Sigmoid colon (tissue), 7 donors: ENCODE measurements at regions of chr6 and their contacts with region 1.

Region 1: GRCh38 chr6:154156135-154156896 is 117.3 kb downstream of the OPRM1 start:
- DNase-seq: no peak
- H3K4me3 ChIP-seq: no peak overlapping the region
- H3K27ac ChIP-seq: no peak overlapping the region
- H3K4me1 ChIP-seq: peaks cover 0 to 14% (median 9%) of the 10 kb centered on the region in 4 donors
- H3K27me3 ChIP-seq: no peaks in the 10 kb centered on the region
- CTCF ChIP-seq: peak in 2 of 4 experiments; percentile 6 to 14
- EP300 ChIP-seq: no peak
- POLR2A ChIP-seq: no peak

Region 2: GRCh38 chr6:154276810-154277628 is 120.7 kb after region 1 on chr6:
- intact Hi-C with region 1: loop called (anchors 2 kb)
- DNase-seq: no peak
- H3K4me3 ChIP-seq: no peak overlapping the region
- H3K27ac ChIP-seq: no peak overlapping the region
- H3K4me1 ChIP-seq: no peaks in the 10 kb centered on the region
- H3K27me3 ChIP-seq: no peaks in the 10 kb centered on the region
- CTCF ChIP-seq: peak; percentile 22 to 56 (median 46)
- EP300 ChIP-seq: no peak
- POLR2A ChIP-seq: no peak

Region 3: GRCh38 chr6:154370545-154370944 is 214.2 kb after region 1 on chr6:
- intact Hi-C with region 1: loop called (anchors 10 kb)
- DNase-seq: no peak
- H3K4me3 ChIP-seq: no peak overlapping the region
- H3K27ac ChIP-seq: no peak overlapping the region
- H3K4me1 ChIP-seq: no peaks in the 10 kb centered on the region
- H3K27me3 ChIP-seq: no peaks in the 10 kb centered on the region
- CTCF ChIP-seq: peak in 1 of 4 experiments; percentile 9
- EP300 ChIP-seq: no peak
- POLR2A ChIP-seq: no peak

Region 4: GRCh38 chr6:154410619-154411072 is 254.3 kb after region 1 on chr6:
- intact Hi-C with region 1: loop called (anchors 10 kb)
- DNase-seq: peak; percentile 75
- H3K4me3 ChIP-seq: no peak overlapping the region
- H3K27ac ChIP-seq: peak overlapping the region; percentile 79 to 90 (median 88)
- H3K4me1 ChIP-seq: peaks cover 0 to 44% (median 41%) of the 10 kb centered on the region in 4 donors
- H3K27me3 ChIP-seq: no peaks in the 10 kb centered on the region
- CTCF ChIP-seq: no peak
- EP300 ChIP-seq: peak in 3 of 4 donors; percentile 14 to 32 (median 25)
- POLR2A ChIP-seq: no peak

Region 5: GRCh38 chr6:154510143-154510905 is 354.0 kb after region 1 on chr6 and contains the start of gene CNKSR3:
- intact Hi-C with region 1: loop called (anchors 5 kb)
- DNase-seq: peak; percentile 96
- H3K4me3 ChIP-seq: peak within 1 kb of the TSS; percentile 62 to 81 (median 76)
- H3K27ac ChIP-seq: peak within 1 kb of the TSS; percentile 93 to 98 (median 95)
- H3K4me1 ChIP-seq: peaks cover 0 to 44% (median 37%) of the 10 kb centered on the region in 4 donors
- H3K27me3 ChIP-seq: no peaks in the 10 kb centered on the region
- CTCF ChIP-seq: no peak
- EP300 ChIP-seq: no peak
- POLR2A ChIP-seq: peak; percentile 46 to 77
- total RNA-seq, gene CNKSR3: 12.8 to 16.8 (median 14.4) TPM

Region 6: GRCh38 chr6:154515826-154516225 is 359.5 kb after region 1 on chr6:
- intact Hi-C with region 1: loop called (anchors 5 kb)
- DNase-seq: no peak
- H3K4me3 ChIP-seq: peak overlapping the region in 2 of 4 donors; percentile 13 to 25
- H3K27ac ChIP-seq: peak overlapping the region in 2 of 4 donors; percentile 39
- H3K4me1 ChIP-seq: peaks cover 0 to 13% (median 10%) of the 10 kb centered on the region in 4 donors
- H3K27me3 ChIP-seq: no peaks in the 10 kb centered on the region
- CTCF ChIP-seq: no peak
- EP300 ChIP-seq: no peak
- POLR2A ChIP-seq: no peak

Region 7: GRCh38 chr6:154805288-154805911 is 649.1 kb after region 1 on chr6:
- intact Hi-C with region 1: loop called (anchors 5 kb)
- DNase-seq: no peak
- H3K4me3 ChIP-seq: no peak overlapping the region
- H3K27ac ChIP-seq: no peak overlapping the region
- H3K4me1 ChIP-seq: no peaks in the 10 kb centered on the region
- H3K27me3 ChIP-seq: no peaks in the 10 kb centered on the region
- CTCF ChIP-seq: peak in 3 of 4 experiments; percentile 9 to 32 (median 24)
- EP300 ChIP-seq: no peak
- POLR2A ChIP-seq: no peak